AG04449 (cell line): ENCODE measurements at regions of chr19 and their contacts with region 1.

Region 1: DNA sequence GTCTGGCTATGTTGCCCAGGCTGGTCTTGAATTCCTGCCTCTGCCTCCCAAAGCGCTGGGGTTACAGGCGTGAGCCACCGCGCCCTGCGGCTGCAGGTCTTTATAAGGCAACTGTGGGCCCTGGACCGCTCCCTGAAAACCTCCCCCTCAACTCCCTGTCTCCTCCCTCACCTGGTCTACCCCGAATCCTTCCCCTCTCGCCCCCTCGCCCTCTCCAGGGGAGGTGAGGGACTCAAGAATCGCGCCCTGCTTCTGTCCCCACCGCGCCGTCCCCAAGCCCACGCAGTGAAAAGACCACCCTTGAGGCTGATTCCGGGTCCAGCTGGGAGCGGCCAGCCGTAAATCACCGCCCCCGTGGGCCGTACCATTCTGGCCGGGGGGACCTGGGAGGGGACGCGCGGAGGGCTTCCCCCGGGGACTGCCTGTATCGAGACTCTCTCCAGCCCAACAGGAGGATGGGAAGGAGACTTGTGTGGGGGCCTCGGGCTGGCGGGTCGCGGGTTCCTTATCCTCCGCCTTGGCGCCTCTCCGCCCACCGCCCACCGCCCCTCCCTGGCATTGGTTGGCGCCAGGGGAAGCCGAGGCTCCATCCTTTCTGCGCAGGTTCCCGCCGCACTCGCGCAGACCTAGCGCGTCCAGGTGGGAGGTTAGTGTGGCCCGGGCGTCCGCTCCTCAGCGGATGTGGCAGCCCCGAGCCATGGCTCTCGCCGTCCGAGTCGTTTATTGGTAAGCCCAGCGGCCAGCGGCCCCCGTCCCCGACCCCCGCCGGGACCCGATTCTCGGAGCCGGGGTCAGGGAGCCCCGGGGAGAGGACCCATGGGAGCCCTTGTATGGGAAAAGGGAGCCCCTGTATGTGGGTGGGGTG is at the start of gene SELENOW:
- DNase-seq: no peak
- H3K4me3 ChIP-seq: peak within 1 kb of the TSS; percentile 96
- CTCF ChIP-seq: no peak

Region 2: DNA sequence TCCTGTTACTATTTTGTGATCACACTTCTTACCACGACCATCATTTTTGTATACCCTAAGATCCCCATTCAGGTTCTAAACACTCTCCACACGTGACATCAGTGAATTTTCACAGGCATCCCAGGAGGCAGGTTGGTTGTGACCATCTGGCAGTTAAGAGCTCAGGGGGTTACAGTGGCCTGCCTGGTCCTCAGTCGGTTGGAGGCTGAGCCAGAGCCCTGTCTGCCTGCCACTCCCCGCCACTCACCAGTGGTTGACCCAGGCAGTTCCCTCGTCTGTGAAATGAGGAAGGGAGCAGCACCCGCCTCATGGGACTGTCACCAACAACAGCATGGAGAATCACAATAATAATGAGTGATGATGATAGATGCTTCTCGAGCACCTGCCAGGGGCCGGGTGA is 101.5 kb before region 1 on chr19:
- CTCF ChIA-PET with region 1: no interaction called
- POLR2A ChIA-PET with region 1: no interaction called
- DNase-seq: no peak
- H3K4me3 ChIP-seq: no peak overlapping the region
- CTCF ChIP-seq: no peak

Region 3: DNA sequence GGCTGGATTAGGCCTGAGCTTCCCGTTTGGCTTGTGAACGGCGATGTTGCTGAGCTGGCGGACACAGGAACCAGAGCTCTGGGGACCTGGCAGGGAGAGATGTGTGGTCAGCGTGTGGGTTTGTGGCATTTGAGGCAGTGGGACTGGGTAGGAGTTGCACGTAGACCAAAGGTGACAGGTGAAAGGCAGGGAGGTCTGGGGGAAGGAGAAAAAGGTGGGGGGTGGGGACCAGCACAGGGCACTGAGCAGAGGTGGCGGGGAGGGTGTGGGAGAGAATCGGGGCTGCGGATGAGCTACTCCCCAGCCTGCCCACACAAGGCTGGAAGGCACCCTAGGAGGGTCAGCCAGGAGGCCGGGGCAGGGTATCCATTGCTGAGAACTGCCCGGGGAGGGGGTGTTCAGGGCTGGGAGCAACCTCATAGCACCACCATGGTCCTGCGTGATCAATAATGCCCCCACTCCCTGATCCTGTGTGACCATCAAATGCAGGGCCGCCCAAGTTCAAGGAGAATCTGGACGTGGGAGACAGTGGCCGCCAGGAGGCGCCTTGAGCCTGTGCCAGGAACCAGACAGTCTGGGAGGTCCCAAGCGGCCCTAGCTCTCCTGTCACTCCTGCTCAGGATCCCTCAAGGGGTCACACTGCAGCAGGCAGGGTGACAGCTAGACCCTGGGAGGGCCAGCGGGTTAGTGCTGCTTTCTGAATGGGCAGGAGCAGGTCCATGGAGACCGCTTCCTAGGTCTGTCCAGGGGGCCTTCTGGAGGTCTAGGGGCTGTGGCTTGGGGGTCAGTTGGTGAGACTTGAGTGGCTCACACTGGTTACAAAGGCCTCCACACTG is 12.6 kb before region 1 on chr19:
- CTCF ChIA-PET with region 1: interaction called, 63 read pairs
- POLR2A ChIA-PET with region 1: interaction called, 4 read pairs
- DNase-seq: no peak
- H3K4me3 ChIP-seq: no peak overlapping the region
- CTCF ChIP-seq: peak; percentile 88